ENCODE measurements at regions of chr9 and their contacts with region 1.

Region 1: DNA sequence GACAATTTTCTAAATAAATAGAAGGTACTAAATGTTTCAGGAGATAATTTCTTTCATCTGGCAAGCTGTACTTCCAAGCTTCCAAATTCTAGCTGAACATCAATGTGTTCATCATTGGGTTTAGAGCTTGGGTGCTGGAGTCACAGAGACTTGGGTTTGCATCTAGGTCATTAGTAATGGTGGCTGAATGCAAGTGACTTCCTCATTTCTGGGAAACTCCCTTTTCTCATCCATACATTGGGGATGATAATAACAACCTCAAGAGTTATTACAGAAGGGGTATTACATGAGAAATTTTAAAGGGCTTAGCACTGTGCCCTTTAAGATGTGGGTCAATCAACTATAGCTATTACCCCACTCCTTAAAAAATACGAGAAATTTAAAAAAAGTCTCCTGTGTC is 41.1 kb upstream of the KLF4 start:
- DNase-seq: no peak
- H3K4me3 ChIP-seq: no peak overlapping the region
- H3K27ac ChIP-seq: no peak overlapping the region
- H3K4me1 ChIP-seq: no peaks in the 10 kb centered on the region
- H3K27me3 ChIP-seq: no peaks in the 10 kb centered on the region
- CTCF ChIP-seq: no peak

Region 2: GRCh38 chr9:107176436-107177151 is 354.1 kb before region 1 on chr9:
- CTCF ChIA-PET with region 1: no interaction called
- POLR2A ChIA-PET with region 1: no interaction called
- intact Hi-C with region 1: no loop called
- DNase-seq: no peak
- H3K4me3 ChIP-seq: no peak overlapping the region
- H3K27ac ChIP-seq: no peak overlapping the region
- H3K4me1 ChIP-seq: no peaks in the 10 kb centered on the region; the same call in 1 of the 2 replicates
- H3K27me3 ChIP-seq: no peaks in the 10 kb centered on the region
- CTCF ChIP-seq: no peak

Region 3: DNA sequence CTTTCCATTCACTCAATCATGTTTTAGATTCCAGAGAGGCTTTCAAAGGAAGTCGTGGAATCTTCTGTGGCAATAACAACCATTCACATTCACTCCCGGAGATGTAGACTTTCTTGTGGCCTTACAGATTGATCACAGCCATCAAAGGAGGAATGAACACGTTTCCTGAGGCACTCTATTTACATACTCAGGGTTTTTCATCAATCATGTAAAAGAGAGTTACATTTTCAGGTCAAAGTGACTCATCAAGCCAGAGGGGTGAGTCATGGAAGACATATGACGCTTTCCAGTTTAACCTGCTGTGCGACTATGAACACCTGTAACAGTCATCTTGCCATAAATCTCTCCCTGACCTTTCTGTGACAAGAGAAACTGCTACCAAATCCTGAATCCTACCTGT is 286.9 kb before region 1 on chr9:
- CTCF ChIA-PET with region 1: no interaction called
- POLR2A ChIA-PET with region 1: no interaction called
- intact Hi-C with region 1: no loop called
- DNase-seq: peak; percentile 76 to 99
- H3K4me3 ChIP-seq: peak overlapping the region; percentile 15; the same call in 1 of the 2 replicates
- H3K27ac ChIP-seq: peak overlapping the region; percentile 92
- H3K4me1 ChIP-seq: peaks cover 76% of the 10 kb centered on the region
- H3K27me3 ChIP-seq: no peaks in the 10 kb centered on the region
- CTCF ChIP-seq: no peak

Region 4: DNA sequence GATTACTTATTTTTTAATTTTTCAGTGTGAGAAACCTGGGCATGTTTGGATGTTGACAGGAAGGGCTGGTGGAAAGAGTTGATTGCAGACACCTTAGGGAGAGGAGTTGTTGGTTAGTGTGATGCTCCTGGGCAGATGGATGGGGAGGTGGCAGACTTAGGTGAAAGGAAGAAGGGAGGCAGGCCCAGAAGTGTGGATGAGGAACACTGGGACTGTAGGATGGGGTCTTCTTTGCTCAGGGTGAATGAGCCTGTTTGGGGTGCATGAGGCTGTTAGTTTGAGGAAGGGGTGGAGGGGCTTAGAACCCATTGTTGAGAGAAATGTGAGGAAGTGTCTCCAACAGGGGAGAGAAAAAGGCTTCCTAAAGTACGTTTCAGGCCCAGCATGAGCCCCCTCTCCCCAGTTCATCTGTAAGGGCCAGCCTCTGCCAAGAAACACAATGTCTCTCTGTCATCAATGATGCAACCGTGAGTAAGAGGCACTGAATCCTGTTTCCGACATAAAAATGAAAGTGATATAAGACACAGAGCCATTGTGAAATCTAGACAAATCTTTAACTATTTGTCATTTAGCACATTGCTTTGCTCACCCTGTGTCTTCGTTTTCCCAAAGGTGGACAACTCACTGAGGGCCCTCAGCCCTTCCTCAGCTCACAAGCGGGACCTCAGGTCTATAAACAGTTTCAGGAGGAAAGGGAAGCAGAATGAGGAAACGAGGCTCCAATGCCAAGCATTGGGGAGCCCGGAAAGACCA is 17.5 kb after region 1 on chr9:
- CTCF ChIA-PET with region 1: no interaction called
- POLR2A ChIA-PET with region 1: no interaction called
- intact Hi-C with region 1: no loop called
- DNase-seq: peak; percentile 18 to 83
- H3K4me3 ChIP-seq: no peak overlapping the region
- H3K27ac ChIP-seq: peak overlapping the region; percentile 87
- H3K4me1 ChIP-seq: peaks cover 21% of the 10 kb centered on the region
- H3K27me3 ChIP-seq: no peaks in the 10 kb centered on the region
- CTCF ChIP-seq: no peak

Region 5: GRCh38 chr9:108219664-108220063 is 689.0 kb after region 1 on chr9:
- CTCF ChIA-PET with region 1: interaction called, 14 read pairs
- POLR2A ChIA-PET with region 1: no interaction called
- intact Hi-C with region 1: no loop called
- DNase-seq: no peak
- H3K4me3 ChIP-seq: no peak overlapping the region
- H3K27ac ChIP-seq: no peak overlapping the region
- H3K4me1 ChIP-seq: no peaks in the 10 kb centered on the region
- H3K27me3 ChIP-seq: no peaks in the 10 kb centered on the region
- CTCF ChIP-seq: no peak